Ascending aorta (tissue), 2 donors: ENCODE measurements at regions of chr14 and their contacts with region 1.

Region 1: DNA sequence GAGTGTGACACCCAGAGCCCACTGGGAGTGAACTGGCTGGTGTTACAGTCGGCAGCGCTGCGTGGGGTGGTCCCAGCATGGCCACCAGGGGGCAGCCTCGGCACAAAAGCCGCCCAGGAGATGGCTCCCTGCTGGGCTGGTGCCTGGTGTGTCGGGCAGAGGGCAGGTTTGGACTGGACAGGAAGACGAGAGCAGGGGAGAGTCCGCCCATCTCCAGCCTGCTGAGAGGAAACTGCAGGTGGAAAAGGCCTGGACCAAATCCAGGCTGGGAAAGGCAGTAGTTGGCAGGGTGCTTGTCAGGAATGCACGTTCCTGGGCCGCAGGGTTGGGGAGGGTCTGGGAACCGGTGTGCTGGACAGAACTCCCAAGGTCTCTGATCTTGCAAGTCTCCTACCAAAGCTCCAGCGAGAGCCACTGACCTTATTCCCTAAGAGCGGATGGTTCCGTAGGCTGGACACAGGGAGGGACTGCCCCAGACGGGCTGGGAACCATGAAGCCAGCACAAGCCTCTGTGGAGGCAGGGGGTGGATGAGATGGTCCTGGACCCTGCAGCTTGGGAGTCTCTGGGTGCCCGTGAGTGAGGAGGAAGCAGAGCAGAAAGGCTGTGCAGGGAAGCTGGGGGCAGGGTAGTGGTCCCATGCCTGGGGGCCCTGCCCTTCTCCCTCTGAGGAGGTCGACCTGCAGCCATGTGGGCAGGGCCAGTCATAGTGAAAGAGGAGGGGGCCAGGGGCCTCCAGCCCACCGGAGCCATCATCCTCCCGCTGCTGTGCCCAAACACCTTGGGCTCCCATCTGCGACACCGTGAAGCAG is 1.8 kb downstream of the AHNAK2 start:
- DNase-seq: peak in 1 of 2 donors; percentile 90
- H3K4me3 ChIP-seq: peak overlapping the region in 1 of 2 donors; percentile 73
- H3K27ac ChIP-seq: peak overlapping the region; percentile 92 to 97
- H3K4me1 ChIP-seq: peaks cover 33 to 62% of the 10 kb centered on the region in 2 donors
- H3K27me3 ChIP-seq: no peaks in the 10 kb centered on the region
- CTCF ChIP-seq: peak; percentile 84 to 90 (median 87)

Region 2: DNA sequence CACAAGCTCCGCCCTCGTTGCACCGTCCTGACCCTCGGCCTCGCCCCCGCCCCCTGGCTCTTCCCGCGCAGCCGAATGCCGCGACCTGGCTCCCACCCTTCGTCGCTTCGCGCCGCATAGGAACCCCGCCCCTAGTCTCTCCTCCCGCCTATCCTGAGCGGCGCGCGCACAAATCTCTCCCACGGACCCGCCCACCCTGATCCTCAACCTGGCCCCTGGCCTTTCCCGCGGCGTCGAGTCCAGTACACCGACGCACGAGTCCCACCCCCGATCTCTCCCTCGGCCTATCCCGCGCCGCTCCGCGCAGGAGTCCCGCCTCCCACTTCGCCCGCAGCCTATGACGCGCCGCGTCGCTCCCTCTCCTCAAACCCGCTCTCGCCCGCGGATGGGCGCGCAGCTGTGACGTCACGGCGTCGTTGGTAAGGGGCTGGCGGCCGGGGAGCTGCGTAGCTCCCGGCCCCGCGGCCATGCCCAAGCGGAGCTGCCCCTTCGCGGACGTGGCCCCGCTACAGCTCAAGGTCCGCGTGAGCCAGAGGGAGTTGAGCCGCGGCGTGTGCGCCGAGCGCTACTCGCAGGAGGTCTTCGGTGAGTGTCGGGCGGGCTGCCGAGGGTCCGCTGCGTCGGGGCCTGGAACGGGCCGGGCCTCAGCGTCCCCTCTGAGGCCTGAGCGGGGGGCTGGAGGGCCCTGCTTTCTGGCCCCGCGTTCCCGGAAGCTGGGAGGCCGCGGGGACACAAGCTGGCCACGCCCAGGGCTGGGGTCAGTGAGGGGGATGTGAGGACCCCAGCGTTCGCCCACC is 223.5 kb before region 1 on chr14 and contains the start of gene SIVA1:
- intact Hi-C with region 1: loop called (anchors 2 kb)
- DNase-seq: peak; percentile 98 to 100
- H3K4me3 ChIP-seq: peak within 1 kb of the TSS; percentile 89 to 99
- H3K27ac ChIP-seq: peak within 1 kb of the TSS; percentile 81 to 95
- H3K4me1 ChIP-seq: peaks cover 40 to 55% of the 10 kb centered on the region in 2 donors
- H3K27me3 ChIP-seq: no peaks in the 10 kb centered on the region
- CTCF ChIP-seq: no peak
- total RNA-seq, gene SIVA1: 410 TPM

Region 3: DNA sequence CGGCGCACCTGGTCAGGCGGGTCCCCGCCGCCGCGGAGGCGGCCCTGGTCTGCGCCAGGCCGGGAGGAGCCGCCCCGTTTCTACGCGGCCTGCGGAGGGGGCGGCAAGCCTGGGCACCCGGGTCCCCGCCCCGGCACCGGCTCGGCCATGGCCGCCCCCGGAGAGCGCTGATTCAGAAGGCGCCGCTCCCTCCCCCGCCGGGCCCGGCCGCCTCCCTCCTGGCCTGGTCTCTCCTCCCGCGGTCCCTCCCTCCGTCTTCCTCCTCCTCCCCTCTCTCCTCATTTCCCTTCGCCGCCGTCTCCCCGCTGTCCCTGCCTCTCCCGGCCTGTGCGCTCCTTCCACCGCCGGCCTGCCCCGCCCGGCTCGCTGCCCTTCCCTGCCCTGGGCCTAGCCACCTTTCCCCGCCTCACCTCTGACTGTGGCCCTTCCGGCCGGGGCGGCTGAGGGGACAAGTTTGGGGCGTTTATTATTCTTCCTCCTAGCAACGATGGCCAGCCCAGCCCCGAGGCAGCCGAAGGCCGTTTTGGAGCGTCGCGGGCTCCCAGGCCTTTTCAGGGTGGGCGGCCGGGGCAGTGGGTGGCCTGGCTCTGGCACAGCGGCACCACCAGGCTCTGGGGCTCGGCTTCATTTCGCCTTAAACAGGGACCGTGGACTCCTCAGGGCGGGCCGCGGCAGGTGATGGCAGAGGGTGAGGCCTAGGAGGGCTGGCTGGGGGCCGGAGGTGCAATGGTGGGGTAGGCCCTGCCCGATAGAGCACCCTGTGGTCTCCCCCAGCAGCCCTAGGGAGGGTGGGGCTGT is 110.6 kb before region 1 on chr14:
- intact Hi-C with region 1: loop called (anchors 5 kb)
- DNase-seq: peak; percentile 18 to 88
- H3K4me3 ChIP-seq: peak overlapping the region; percentile 84 to 90
- H3K27ac ChIP-seq: peak overlapping the region; percentile 55 to 80
- H3K4me1 ChIP-seq: peaks cover 4 to 16% of the 10 kb centered on the region in 2 donors
- H3K27me3 ChIP-seq: no peaks in the 10 kb centered on the region
- CTCF ChIP-seq: no peak

Region 4: GRCh38 chr14:105020815-105021655 is 44.6 kb after region 1 on chr14 and contains the start of gene CDCA4:
- intact Hi-C with region 1: loop called (anchors 1 kb)
- DNase-seq: peak; percentile 90 to 98
- H3K4me3 ChIP-seq: peak within 1 kb of the TSS; percentile 87 to 100
- H3K27ac ChIP-seq: peak within 1 kb of the TSS; percentile 51 to 69
- H3K4me1 ChIP-seq: peaks cover 10% of the 10 kb centered on the region in 2 donors
- H3K27me3 ChIP-seq: no peaks in the 10 kb centered on the region
- CTCF ChIP-seq: no peak
- total RNA-seq, gene CDCA4: 2.3 TPM

Region 5: GRCh38 chr14:105153271-105153731 is 176.9 kb after region 1 on chr14:
- intact Hi-C with region 1: no loop called
- DNase-seq: no peak
- H3K4me3 ChIP-seq: no peak overlapping the region
- H3K27ac ChIP-seq: no peak overlapping the region
- H3K4me1 ChIP-seq: no peaks in the 10 kb centered on the region
- H3K27me3 ChIP-seq: no peaks in the 10 kb centered on the region
- CTCF ChIP-seq: no peak

Region 6: DNA sequence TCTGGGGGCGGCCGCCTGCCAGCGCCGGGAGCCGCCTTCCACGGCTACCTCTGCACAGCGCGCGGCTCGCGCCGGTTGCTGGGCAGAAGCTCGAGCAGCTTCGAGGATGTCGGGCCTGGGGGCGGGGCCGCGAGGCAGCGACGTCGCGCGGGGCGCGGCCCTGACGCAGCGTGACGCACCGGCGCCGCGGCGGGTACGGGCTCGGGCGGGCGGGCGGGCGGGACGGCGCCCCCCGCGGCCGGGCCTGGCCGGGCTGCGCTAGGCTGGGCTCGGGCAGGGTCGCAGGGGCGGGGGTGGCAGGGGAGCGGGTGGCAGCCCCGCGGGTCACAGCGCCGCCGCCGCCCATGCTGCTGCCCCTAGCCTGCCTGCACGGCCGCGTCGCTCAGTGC is 272.0 kb after region 1 on chr14 and contains the start of gene BTBD6:
- intact Hi-C with region 1: loop called (anchors 10 kb)
- DNase-seq: peak; percentile 37 to 91
- H3K4me3 ChIP-seq: peak within 1 kb of the TSS; percentile 72
- H3K27ac ChIP-seq: peak within 1 kb of the TSS; percentile 84 to 88
- H3K4me1 ChIP-seq: peaks cover 4 to 17% of the 10 kb centered on the region in 2 donors
- H3K27me3 ChIP-seq: no peaks in the 10 kb centered on the region
- CTCF ChIP-seq: no peak
- total RNA-seq, gene BTBD6: 80.1 TPM

Region 7: GRCh38 chr14:105258846-105259245 is 282.4 kb after region 1 on chr14:
- intact Hi-C with region 1: no loop called
- DNase-seq: no peak
- H3K4me3 ChIP-seq: no peak overlapping the region
- H3K27ac ChIP-seq: no peak overlapping the region
- H3K4me1 ChIP-seq: no peaks in the 10 kb centered on the region
- H3K27me3 ChIP-seq: no peaks in the 10 kb centered on the region
- CTCF ChIP-seq: no peak